Heart right ventricle (tissue), 16 donors: ENCODE measurements at regions of chr4 and their contacts with region 1.

Region 1: DNA sequence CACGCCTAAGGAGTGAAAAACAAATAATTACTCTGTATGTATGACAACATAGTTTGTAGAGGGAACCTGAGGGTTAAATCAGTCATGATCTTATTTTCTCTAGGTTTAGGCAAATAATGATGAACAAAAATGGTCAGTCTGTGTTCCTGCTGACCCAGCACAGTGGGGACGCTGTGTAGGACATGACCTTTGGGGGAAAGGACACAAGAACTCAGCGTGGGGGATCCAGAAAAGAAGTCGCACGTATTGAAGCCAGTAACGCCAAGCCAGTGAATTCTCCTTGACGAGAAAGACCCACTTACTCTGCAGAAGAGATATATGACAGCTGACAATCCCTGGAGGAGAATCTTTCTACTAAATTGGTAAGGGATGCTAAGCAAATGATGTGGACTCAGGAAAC is 36.6 kb downstream of the HELT start:
- DNase-seq: no peak
- ATAC-seq: no peak
- H3K4me3 ChIP-seq: no peak overlapping the region
- H3K27ac ChIP-seq: no peak overlapping the region
- H3K4me1 ChIP-seq: no peaks in the 10 kb centered on the region
- H3K27me3 ChIP-seq: no peaks in the 10 kb centered on the region
- CTCF ChIP-seq: no peak

Region 2: DNA sequence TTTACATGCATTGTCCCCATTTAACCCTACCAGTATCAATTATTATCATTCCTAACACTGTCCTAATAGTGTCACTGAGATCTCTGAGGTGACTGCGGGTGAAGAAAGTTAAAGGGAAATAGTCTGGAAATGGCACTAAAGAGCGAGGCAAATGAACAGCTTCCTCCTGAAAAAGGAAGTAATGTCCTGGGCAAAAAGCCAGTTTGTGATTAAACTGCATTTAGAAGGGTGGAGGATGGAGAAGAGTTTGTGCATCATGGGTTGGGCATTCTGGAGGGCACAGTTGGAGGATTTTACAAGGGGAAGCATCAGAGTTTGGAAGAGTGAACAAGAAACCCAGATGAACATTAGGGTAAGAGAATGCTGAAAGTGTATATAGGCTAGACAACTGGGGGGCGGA is 27.7 kb after region 1 on chr4:
- intact Hi-C with region 1: loop called in 1 of 10 experiments (anchors 1 kb)
- DNase-seq: no peak
- ATAC-seq: no peak
- H3K4me3 ChIP-seq: no peak overlapping the region
- H3K27ac ChIP-seq: no peak overlapping the region
- H3K4me1 ChIP-seq: no peaks in the 10 kb centered on the region
- H3K27me3 ChIP-seq: peaks cover 0 to 8% (median 0%) of the 10 kb centered on the region in 7 donors
- CTCF ChIP-seq: no peak

Region 3: DNA sequence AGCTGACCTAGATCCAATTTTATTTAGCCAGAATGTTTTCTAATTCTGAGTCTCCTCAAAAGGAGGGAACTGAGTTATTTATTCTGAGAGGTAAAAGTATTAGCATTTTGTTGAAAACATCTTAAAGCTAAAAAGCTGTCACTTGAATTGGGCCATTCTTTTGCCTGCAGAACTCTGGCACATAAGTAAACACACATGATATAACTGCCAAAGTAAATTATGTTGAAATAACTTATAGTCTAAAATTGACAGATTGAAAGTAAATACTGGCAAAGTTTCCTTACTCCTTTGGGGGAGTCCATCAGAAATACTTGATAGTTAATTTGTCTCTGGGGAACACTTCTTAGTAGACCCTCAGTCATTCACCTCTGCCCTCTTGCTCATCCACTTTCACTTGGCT is 49.9 kb after region 1 on chr4:
- intact Hi-C with region 1: no loop called
- DNase-seq: no peak
- ATAC-seq: no peak
- H3K4me3 ChIP-seq: no peak overlapping the region
- H3K27ac ChIP-seq: no peak overlapping the region
- H3K4me1 ChIP-seq: peaks cover 0 to 9% (median 0%) of the 10 kb centered on the region in 9 donors
- H3K27me3 ChIP-seq: no peaks in the 10 kb centered on the region
- CTCF ChIP-seq: no peak

Region 4: GRCh38 chr4:185115827-185116232 is 61.0 kb after region 1 on chr4:
- intact Hi-C with region 1: no loop called
- DNase-seq: peak; percentile 74 to 83
- ATAC-seq: peak; percentile 80 to 93 (median 89)
- H3K4me3 ChIP-seq: peak overlapping the region in 2 of 10 donors; percentile 8 to 14
- H3K27ac ChIP-seq: peak overlapping the region; percentile 31 to 87 (median 68)
- H3K4me1 ChIP-seq: peaks cover 9 to 84% (median 40%) of the 10 kb centered on the region in 9 donors
- H3K27me3 ChIP-seq: no peaks in the 10 kb centered on the region
- CTCF ChIP-seq: no peak